ENCODE measurements at regions of chr1 and their contacts with region 1.

Region 1: DNA sequence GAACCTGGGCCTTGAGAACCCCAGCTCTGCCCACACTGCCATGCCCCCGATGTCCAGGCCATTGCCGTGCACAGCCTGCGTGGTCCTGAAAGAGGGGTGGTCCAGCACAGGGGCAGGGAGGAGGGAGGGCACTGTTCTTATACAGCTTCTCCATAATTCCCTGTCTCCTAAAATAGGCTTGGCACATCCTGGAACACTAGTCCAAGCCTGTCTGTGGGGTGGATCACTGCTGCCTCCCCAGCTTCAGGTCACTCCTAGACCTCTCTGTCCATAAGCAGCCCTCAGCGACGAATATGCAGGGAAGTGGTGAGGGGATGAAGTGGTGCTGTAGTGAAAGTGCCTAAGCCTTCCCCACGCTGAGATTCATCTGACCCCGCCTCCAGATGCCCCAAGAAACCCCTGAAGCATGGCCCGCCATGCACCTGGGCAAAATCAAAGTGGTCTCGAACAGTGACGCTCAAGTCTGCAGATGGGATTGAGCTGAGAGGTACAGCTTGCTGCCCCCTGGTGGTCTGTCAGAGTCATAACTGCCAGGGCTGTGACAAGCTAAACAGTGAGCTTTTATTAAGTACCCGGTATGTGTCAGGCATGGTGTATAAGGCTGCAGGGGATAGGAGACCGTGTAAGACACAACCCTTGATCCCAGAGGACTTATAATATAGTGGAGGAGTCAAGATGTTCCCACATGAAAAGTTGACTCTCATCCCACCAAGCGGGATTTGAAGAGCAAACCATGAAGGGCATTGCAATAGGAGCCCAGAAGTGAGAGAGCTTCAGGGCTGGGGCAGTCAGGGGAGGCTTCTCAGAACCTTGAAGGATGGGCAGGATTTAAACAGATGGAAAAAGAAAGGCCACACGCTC is 66.6 kb downstream of the FAM163A start:
- H3K4me3 ChIP-seq: no peak overlapping the region
- H3K27ac ChIP-seq: no peak overlapping the region
- H3K4me1 ChIP-seq: no peaks in the 10 kb centered on the region
- CTCF ChIP-seq: peak; percentile 81

Region 2: GRCh38 chr1:179728271-179728670 is 81.5 kb before region 1 on chr1:
- CTCF ChIA-PET with region 1: interaction called, 14 read pairs
- POLR2A ChIA-PET with region 1: no interaction called
- H3K4me3 ChIP-seq: no peak overlapping the region
- H3K27ac ChIP-seq: no peak overlapping the region
- H3K4me1 ChIP-seq: no peaks in the 10 kb centered on the region
- CTCF ChIP-seq: no peak

Region 3: GRCh38 chr1:179781962-179782361 is 27.8 kb before region 1 on chr1:
- CTCF ChIA-PET with region 1: interaction called, 12 read pairs
- POLR2A ChIA-PET with region 1: no interaction called
- H3K4me3 ChIP-seq: no peak overlapping the region
- H3K27ac ChIP-seq: no peak overlapping the region
- H3K4me1 ChIP-seq: peaks cover 17% of the 10 kb centered on the region; the same call in 1 of the 2 replicates
- CTCF ChIP-seq: no peak

Region 4: GRCh38 chr1:179824265-179824664 is 14.5 kb after region 1 on chr1:
- CTCF ChIA-PET with region 1: interaction called, 22 read pairs
- POLR2A ChIA-PET with region 1: interaction called, 3 read pairs
- H3K4me3 ChIP-seq: no peak overlapping the region
- H3K27ac ChIP-seq: no peak overlapping the region
- H3K4me1 ChIP-seq: no peaks in the 10 kb centered on the region
- CTCF ChIP-seq: no peak

Region 5: GRCh38 chr1:179853102-179853501 is 43.4 kb after region 1 on chr1:
- CTCF ChIA-PET with region 1: interaction called, 22 read pairs
- POLR2A ChIA-PET with region 1: no interaction called
- H3K4me3 ChIP-seq: no peak overlapping the region
- H3K27ac ChIP-seq: no peak overlapping the region
- H3K4me1 ChIP-seq: no peaks in the 10 kb centered on the region
- CTCF ChIP-seq: no peak

Measured in HEK293 (cell line).